IMR-90 (cell line): ENCODE measurements at regions of chr2 and their contacts with region 1.

Region 1: DNA sequence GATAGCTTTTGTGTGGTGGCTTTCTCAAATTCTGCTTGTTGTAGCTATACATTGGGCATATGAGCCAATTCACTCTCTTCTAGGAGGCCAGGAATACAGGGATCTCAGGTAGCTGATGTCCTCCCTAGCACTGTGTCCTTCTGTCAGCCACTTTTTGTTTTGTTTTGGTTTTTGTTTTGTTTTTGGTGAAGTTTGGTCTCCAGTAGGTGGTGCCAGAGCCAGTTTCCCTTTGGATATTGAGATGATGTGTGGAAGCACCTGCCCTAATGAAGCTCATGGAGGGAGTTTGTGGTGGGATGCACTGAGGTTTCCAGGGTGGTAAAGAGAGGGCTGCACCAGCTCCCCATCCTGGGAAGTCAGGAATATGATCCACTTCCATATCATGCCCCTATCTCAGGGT is 100.5 kb upstream of the VWC2L start:
- DNase-seq: no peak
- ATAC-seq: peak; percentile 35
- H3K4me3 ChIP-seq: no peak overlapping the region
- H3K27ac ChIP-seq: no peak overlapping the region
- H3K4me1 ChIP-seq: no peaks in the 10 kb centered on the region
- H3K27me3 ChIP-seq: no peaks in the 10 kb centered on the region
- CTCF ChIP-seq: 0 out of 2 replicates have a peak, but pooled peaks have one; percentile 28
- POLR2A ChIP-seq: no peak
- RAD21 ChIP-seq: no peak

Region 2: DNA sequence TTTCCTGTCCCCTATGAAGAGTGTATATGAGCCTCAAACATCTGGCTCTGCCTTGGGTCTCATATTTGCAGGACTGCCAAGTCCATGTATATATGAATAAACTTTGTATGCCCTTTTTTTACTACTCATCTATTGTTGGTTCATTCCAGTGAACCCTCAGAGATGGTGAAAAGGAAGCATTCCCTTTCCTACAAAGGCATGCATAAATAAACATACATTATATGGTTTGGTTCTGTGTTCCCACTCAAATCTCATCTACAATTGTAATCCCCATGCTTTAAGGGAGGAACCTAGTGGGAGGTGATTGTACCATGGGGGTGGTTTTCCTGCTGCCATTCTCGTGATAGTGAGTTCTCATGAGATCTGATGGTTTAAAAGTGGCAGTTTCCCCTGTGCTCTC is 491.9 kb before region 1 on chr2:
- CTCF ChIA-PET with region 1: no interaction called
- POLR2A ChIA-PET with region 1: no interaction called
- dilution Hi-C with region 1: no loop called
- in situ Hi-C with region 1: no loop called
- intact Hi-C with region 1: loop called (anchors 10 kb)
- DNase-seq: peak; percentile 76
- ATAC-seq: peak; percentile 89
- H3K4me3 ChIP-seq: no peak overlapping the region
- H3K27ac ChIP-seq: no peak overlapping the region
- H3K4me1 ChIP-seq: peaks cover 3% of the 10 kb centered on the region; the same call in 1 of the 2 replicates
- H3K27me3 ChIP-seq: no peaks in the 10 kb centered on the region
- CTCF ChIP-seq: no peak
- POLR2A ChIP-seq: no peak
- RAD21 ChIP-seq: no peak

Region 3: GRCh38 chr2:214537929-214538328 is 227.6 kb after region 1 on chr2:
- CTCF ChIA-PET with region 1: no interaction called
- POLR2A ChIA-PET with region 1: no interaction called
- dilution Hi-C with region 1: no loop called
- in situ Hi-C with region 1: no loop called
- intact Hi-C with region 1: no loop called
- DNase-seq: no peak
- ATAC-seq: no peak
- H3K4me3 ChIP-seq: no peak overlapping the region
- H3K27ac ChIP-seq: no peak overlapping the region
- H3K4me1 ChIP-seq: peaks cover 17% of the 10 kb centered on the region
- H3K27me3 ChIP-seq: no peaks in the 10 kb centered on the region
- CTCF ChIP-seq: no peak
- POLR2A ChIP-seq: no peak
- RAD21 ChIP-seq: no peak

Region 4: DNA sequence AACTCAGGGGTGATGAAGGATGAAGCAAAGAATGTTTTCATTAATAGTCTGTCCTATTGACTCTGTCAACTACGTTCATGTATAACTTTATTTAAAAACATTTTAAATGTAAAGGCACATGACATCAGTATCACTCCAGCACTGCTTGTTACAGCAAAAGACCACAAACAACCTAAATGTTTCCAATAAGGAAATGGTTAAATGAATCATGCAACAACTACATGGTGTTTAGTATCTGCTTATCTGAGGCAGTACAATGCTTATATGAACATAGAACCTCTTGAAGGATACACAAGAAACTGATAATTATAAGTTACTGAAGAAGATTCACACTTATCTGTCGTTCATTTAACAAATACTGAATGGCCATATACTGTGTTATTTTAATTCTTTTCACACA is 490.7 kb after region 1 on chr2:
- CTCF ChIA-PET with region 1: no interaction called
- POLR2A ChIA-PET with region 1: no interaction called
- dilution Hi-C with region 1: no loop called
- in situ Hi-C with region 1: no loop called
- intact Hi-C with region 1: loop called (anchors 5 kb)
- DNase-seq: peak; percentile 16
- ATAC-seq: no peak
- H3K4me3 ChIP-seq: no peak overlapping the region
- H3K27ac ChIP-seq: no peak overlapping the region
- H3K4me1 ChIP-seq: no peaks in the 10 kb centered on the region
- H3K27me3 ChIP-seq: no peaks in the 10 kb centered on the region
- CTCF ChIP-seq: no peak
- POLR2A ChIP-seq: no peak
- RAD21 ChIP-seq: no peak